K562 (cell line): ENCODE measurements at regions of chr11 and their contacts with region 1.

Region 1: DNA sequence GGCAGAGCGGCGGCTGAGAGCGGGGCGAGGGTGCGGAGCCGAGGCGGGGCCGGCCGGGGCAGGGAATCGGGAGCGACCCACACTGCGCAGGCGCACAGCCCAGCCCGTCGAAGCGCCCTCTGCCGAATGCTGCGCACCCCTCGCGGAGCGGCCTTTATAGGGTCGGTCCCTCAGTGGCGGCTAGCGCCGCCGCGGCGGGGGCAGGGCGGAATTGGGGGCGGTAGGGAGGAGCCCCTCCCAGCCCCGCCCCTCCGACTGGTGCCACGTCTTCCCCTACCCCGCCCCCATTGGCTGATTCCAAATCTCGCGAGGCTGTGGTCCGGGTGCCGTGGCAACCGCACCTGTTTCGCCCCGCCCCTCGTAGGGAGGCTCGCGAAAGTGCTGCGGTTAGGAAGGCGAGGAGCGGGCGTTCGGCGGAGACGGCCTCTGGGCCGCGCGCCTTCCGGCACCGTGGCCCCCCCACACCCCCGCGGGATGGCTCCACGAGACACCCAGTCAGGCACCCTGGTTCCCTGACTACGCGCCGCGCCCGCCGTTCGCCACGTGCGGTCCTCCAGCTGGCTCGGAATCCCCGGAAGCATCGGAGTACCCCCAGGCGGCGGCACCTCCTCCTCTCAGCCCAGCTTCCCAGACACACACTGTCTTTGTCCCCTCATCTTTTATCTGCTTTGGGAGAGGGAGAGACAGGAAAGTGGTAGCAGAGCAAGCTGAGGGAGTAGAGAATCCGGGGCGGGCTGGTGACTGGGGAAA is at the start of gene EHD1:
- DNase-seq: peak; percentile 99 to 100 (median 99)
- ATAC-seq: peak; percentile 93
- H3K4me3 ChIP-seq: peak within 1 kb of the TSS; percentile 71
- H3K27ac ChIP-seq: peak within 1 kb of the TSS; percentile 88
- H3K4me1 ChIP-seq: peaks cover 26 to 60% of the 10 kb centered on the region in 2 experiments
- H3K27me3 ChIP-seq: no peaks in the 10 kb centered on the region
- CTCF ChIP-seq: peak; percentile 65 to 93 (median 90); a peak in 5 of 6 replicates
- EP300 ChIP-seq: 0 out of 2 replicates have a peak, but pooled peaks have one; percentile 13
- POLR2A ChIP-seq: peak; percentile 91
- RAD21 ChIP-seq: peak; percentile 38 to 42; a peak in 1 of 4 replicates
- polyA plus RNA-seq, gene EHD1: 0.46 to 0.59 TPM

Region 2: DNA sequence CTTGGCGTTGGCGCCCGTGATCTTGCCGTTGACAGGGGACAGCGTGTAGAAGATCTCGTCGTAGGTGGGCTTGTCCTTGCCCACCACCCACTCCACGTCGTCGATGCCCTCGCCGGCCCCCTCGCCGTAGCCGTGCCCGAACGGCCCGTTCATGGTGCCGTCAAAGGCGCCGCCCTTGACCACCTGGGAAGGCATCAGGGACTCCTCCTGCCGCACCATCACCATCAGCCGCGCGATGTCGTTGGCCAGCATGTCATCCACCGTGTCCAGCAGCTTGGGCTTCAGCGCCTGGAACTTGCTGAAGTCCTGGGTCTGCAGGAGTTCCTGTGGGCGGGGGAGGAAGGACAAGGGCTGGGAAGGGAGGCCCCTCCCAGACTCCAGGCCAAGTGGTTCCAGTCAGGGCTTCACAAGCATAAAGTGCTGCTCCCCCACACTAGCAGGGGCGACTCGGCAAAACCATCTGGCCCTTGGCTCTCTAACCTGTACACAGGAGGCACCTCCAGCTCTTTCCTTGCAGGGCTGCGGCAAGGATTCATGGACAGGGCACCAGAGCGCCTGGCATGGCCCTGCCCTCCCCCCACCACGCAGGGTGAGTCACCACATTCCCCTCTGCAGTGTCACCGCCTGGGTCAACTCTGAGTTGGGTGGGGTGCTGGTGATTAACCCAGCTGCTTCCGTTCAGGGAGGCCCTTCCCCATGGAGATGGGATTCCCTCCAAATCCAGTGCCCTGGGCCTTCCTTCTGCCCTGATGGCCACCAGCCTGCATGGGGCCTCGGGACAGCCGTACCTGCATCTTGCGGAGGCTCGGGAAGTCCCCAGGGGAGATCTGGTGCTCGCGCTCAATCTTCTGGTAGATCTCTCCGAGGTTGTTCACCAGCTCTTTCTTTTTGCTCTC is 23.9 kb before region 1 on chr11:
- CTCF ChIA-PET with region 1: no interaction called
- POLR2A ChIA-PET with region 1: interaction called, 26 read pairs
- in situ Hi-C with region 1: no loop called
- intact Hi-C with region 1: no loop called
- DNase-seq: peak; percentile 80 to 86 (median 83)
- ATAC-seq: peak; percentile 85
- H3K4me3 ChIP-seq: no peak overlapping the region
- H3K27ac ChIP-seq: peak overlapping the region; percentile 70
- H3K4me1 ChIP-seq: peaks cover 35 to 79% of the 10 kb centered on the region in 2 experiments
- H3K27me3 ChIP-seq: no peaks in the 10 kb centered on the region
- CTCF ChIP-seq: no peak
- EP300 ChIP-seq: peak; percentile 73; the same call in 1 of the 2 replicates
- POLR2A ChIP-seq: no peak
- RAD21 ChIP-seq: no peak

Region 3: GRCh38 chr11:64864473-64865285 is 14.0 kb before region 1 on chr11:
- CTCF ChIA-PET with region 1: no interaction called
- POLR2A ChIA-PET with region 1: interaction called, 109 read pairs
- in situ Hi-C with region 1: no loop called
- intact Hi-C with region 1: no loop called
- DNase-seq: peak in 2 of 4 experiments; percentile 31 to 34
- ATAC-seq: peak; percentile 54
- H3K4me3 ChIP-seq: no peak overlapping the region
- H3K27ac ChIP-seq: peak overlapping the region; percentile 39; the same call in 2 of the 3 replicates
- H3K4me1 ChIP-seq: peaks cover 21 to 52% of the 10 kb centered on the region in 2 experiments
- H3K27me3 ChIP-seq: no peaks in the 10 kb centered on the region
- CTCF ChIP-seq: no peak
- EP300 ChIP-seq: no peak
- POLR2A ChIP-seq: no peak
- RAD21 ChIP-seq: no peak